Heart right ventricle (tissue), 16 donors: ENCODE measurements at regions of chr1 and their contacts with region 1.

Region 1: GRCh38 chr1:50704126-50704525 is 255.9 kb downstream of the FAF1 start:
- DNase-seq: peak in 1 of 2 donors; percentile 12
- ATAC-seq: no peak
- H3K4me3 ChIP-seq: no peak overlapping the region
- H3K27ac ChIP-seq: no peak overlapping the region
- H3K4me1 ChIP-seq: peaks cover 0 to 17% (median 7%) of the 10 kb centered on the region in 9 donors
- H3K27me3 ChIP-seq: no peaks in the 10 kb centered on the region
- CTCF ChIP-seq: peak; percentile 44 to 85 (median 69)

Region 2: DNA sequence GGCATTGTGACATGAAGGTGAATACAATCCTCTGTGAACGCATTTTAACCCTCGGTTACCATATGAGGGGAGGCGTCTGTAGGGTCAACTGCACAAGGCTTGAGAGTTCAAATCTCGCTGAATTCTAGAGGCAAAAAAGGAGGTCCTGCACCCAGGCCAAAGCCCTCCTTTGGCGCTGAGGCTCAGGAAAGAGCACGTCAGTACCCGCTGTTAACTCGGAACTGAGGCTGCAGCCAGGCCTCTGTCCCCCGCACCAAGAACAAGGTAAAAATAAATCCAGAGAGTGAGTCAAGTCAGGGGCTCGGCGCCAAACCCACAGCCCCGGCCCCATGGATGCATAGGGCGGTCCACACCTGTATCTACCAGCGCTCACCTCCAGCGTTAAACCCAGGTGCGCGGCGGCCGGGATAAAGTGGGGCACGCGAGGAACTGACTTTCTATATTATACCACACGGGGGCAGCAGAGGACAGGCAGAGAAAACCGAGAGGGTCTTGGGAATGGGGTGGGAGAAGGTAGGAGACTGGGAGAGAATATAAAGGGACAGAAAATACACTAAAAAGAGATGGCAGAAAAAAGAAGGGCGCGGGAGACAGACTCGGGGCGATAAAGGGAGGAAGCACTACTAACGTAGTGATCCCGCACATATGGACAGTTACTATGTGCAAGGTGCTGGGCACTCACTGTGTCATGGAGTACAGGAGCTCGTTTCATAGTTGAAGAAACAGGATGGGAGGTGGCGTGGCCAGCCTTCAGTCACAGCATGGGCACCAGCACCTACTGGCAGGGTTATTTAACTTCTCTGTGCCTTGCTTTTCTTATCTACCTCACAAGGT is 335.7 kb before region 1 on chr1:
- intact Hi-C with region 1: loop called in 9 of 10 experiments (anchors 2 to 10 kb)
- DNase-seq: peak in 1 of 2 donors; percentile 18
- ATAC-seq: peak in 4 of 8 donors; percentile 14 to 61 (median 45)
- H3K4me3 ChIP-seq: no peak overlapping the region
- H3K27ac ChIP-seq: no peak overlapping the region
- H3K4me1 ChIP-seq: peaks cover 0 to 7% (median 3%) of the 10 kb centered on the region in 9 donors
- H3K27me3 ChIP-seq: peaks cover 6 to 62% (median 58%) of the 10 kb centered on the region in 7 donors
- CTCF ChIP-seq: peak; percentile 54 to 83 (median 75)